Pancreas (tissue), 10 donors: ENCODE measurements at regions of chr20 and their contacts with region 1.

Region 1: DNA sequence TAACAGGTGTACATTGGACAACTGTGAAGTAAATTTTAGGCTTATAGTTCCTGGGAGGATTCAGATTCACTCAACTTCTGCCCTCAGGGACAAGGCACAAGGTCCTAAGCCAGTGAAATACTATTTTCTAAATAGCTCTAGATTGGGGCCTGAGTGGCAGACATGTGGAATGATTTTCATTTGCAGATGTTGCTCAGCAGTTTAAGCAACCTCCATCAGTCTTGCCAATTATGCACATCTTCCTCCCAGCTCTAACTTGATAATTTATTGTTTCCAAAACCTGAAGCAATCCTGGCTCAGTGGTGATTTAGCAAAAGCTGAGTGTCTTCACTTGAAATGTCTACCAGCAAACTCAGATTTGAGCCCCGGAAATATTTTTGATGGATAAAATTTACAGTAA is 116.2 kb downstream of the SCP2D1 start:
- DNase-seq: no peak
- ATAC-seq: no peak
- H3K4me3 ChIP-seq: no peak overlapping the region
- H3K27ac ChIP-seq: no peak overlapping the region
- H3K4me1 ChIP-seq: no peaks in the 10 kb centered on the region
- H3K27me3 ChIP-seq: no peaks in the 10 kb centered on the region
- CTCF ChIP-seq: no peak

Region 2: GRCh38 chr20:18436847-18437246 is 493.0 kb before region 1 on chr20:
- intact Hi-C with region 1: no loop called
- DNase-seq: no peak
- ATAC-seq: no peak
- H3K4me3 ChIP-seq: no peak overlapping the region
- H3K27ac ChIP-seq: no peak overlapping the region
- H3K4me1 ChIP-seq: no peaks in the 10 kb centered on the region
- H3K27me3 ChIP-seq: no peaks in the 10 kb centered on the region
- CTCF ChIP-seq: no peak

Region 3: GRCh38 chr20:18989736-18990474 is 60.1 kb after region 1 on chr20:
- intact Hi-C with region 1: loop called in 1 of 3 experiments (anchors 10 kb)
- DNase-seq: no peak
- ATAC-seq: peak in 3 of 4 donors; percentile 28 to 38 (median 28)
- H3K4me3 ChIP-seq: no peak overlapping the region
- H3K27ac ChIP-seq: no peak overlapping the region
- H3K4me1 ChIP-seq: no peaks in the 10 kb centered on the region
- H3K27me3 ChIP-seq: no peaks in the 10 kb centered on the region
- CTCF ChIP-seq: no peak

Region 4: GRCh38 chr20:19336631-19337030 is 406.8 kb after region 1 on chr20:
- intact Hi-C with region 1: no loop called
- DNase-seq: no peak
- ATAC-seq: no peak
- H3K4me3 ChIP-seq: no peak overlapping the region
- H3K27ac ChIP-seq: no peak overlapping the region
- H3K4me1 ChIP-seq: no peaks in the 10 kb centered on the region
- H3K27me3 ChIP-seq: no peaks in the 10 kb centered on the region
- CTCF ChIP-seq: no peak